ENCODE measurements at regions of chr5 and their contacts with region 1.

Region 1: DNA sequence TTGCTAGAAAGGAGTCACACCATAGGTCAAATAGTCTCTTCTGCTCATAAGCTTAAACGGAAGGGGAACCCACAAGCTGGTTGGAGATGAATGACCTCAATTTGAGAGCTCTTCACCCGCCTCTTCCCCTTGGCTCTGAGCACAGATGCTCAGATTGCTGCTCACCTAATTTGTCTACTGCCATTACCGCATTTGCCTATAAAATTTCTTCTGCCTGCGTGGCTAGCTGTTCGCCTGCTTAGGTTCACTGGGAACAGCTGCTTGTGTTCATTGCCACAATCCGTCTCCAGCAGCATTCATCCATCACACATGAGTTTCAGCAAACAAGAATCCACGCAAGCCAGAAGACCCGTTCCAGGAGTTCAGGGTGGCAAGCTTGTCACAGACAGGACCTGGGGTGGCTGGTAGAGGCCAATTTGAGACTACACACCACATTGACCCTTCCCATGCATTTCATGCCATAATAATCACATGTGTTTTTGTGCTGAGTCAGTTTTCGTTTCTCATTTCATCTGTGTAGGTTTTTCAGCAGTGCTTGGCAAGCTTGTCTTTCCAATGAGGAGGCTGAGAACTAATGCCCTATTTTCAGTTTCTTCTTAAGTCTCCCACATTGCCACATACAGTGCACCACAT is 50.2 kb upstream of the DNAH5 start:
- DNase-seq: no peak
- ATAC-seq: no peak

Region 2: DNA sequence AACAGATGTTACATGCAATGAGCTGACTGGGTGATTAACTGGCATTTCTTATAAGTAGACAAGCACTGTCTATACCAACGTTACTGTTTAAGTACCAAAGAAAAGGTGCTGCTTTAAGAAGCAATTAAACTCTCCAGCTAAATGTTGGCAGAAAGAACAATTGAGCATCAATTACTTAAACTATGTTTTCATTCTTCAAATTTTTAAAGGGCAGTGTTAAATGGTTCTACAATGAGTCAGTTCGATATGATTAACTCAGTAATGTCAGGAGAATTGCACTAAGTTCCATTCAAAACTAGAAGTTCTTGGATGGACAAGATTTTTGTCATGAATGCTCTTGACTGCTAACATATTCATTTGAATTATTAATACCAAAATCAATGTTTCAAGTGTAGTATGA is 644.0 kb before region 1 on chr5:
- intact Hi-C with region 1: no loop called
- DNase-seq: no peak
- ATAC-seq: no peak

Region 3: DNA sequence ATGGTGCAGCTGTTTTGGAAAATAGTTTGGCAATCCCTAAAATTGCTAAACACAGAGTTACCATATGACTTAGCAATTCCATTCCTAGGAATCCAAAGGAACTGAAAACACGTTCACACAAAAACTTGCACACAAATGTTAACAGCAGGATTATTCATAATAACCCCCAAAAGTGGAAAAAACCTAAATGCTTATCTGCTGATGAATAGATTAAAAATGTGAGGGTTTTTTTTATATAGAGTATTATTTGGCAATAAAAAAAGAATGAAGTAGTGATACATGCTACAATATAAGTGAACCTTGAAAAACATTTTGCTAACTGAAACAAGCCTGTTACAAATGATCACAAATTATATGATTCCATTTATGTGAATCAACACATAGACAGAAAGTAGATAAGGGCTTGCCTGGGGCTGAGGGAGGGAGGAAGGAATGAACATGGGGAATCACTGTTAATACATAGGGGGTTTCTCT is 103.3 kb after region 1 on chr5:
- intact Hi-C with region 1: loop called (anchors 10 kb)
- DNase-seq: no peak
- ATAC-seq: no peak

Region 4: GRCh38 chr5:14118527-14119320 is 124.0 kb after region 1 on chr5:
- intact Hi-C with region 1: no loop called
- DNase-seq: peak; percentile 69
- ATAC-seq: peak; percentile 89

Region 5: GRCh38 chr5:14156650-14157493 is 162.1 kb after region 1 on chr5:
- intact Hi-C with region 1: no loop called
- DNase-seq: no peak
- ATAC-seq: peak; percentile 77

Measured in left ventricle myocardium superior (tissue), 1 donor.